Activated naive CD4-positive, alpha-beta T cell treated with anti-CD3 and anti-CD28 coated beads for 36 hours (primary cell): ENCODE measurements at regions of chr17 and their contacts with region 1.

Region 1: GRCh38 chr17:45256114-45256966 is 5.6 kb downstream of the SPATA32 start:
- DNase-seq: no peak
- H3K4me3 Mint-ChIP-seq: no peak overlapping the region
- H3K27ac Mint-ChIP-seq: no peak overlapping the region
- H3K4me1 Mint-ChIP-seq: peaks cover 51% of the 10 kb centered on the region
- H3K27me3 Mint-ChIP-seq: no peaks in the 10 kb centered on the region

Region 2: DNA sequence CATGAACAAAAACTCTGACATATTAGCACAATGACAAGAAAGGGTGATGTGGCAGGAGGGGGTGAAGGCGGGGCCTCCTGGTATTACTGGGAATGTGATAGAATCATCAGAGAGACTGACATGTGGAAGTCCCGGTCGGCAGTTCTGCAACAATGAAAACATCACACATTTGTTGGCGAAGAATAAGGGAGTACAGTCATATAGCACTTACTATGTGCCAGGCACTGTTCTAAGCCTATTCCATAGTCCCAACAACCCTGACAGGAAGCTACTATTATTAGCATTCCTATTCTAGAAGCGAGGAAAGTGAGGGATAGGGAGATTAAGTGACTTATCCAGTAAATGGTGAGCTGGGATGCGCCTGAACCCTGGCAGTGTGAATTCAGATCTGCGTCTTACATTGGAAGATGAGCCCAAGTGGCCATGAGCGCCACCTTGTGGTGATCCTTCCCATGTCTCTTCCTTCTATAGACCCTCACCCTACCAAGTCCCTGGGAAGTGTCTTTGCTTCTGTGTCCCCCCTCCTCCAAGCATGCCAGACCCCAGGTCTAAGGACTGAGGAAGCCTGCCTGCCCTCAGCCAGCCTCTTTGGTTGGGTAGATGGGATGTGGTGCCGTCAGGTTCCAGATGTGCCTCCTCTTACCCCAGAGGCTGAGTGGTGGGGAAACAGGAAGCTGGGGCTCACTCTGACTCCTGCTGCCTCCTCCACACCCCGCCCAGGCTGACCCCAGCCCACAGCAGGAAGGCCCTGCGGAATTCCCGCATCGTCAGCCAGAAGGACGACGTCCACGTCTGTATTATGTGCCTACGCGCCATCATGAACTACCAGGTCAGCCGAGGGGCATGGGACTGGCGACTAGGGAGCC is 20.7 kb before region 1 on chr17:
- CTCF ChIA-PET with region 1: interaction called, 14 read pairs
- intact Hi-C with region 1: no loop called
- DNase-seq: peak; percentile 89
- H3K4me3 Mint-ChIP-seq: no peak overlapping the region
- H3K27ac Mint-ChIP-seq: peak overlapping the region; percentile 89
- H3K4me1 Mint-ChIP-seq: peaks cover 50% of the 10 kb centered on the region
- H3K27me3 Mint-ChIP-seq: no peaks in the 10 kb centered on the region